Activated CD8-positive, alpha-beta T cell treated with anti-CD3 and anti-CD28 coated beads for 36 hours (primary cell): ENCODE measurements at regions of chr17 and their contacts with region 1.

Region 1: DNA sequence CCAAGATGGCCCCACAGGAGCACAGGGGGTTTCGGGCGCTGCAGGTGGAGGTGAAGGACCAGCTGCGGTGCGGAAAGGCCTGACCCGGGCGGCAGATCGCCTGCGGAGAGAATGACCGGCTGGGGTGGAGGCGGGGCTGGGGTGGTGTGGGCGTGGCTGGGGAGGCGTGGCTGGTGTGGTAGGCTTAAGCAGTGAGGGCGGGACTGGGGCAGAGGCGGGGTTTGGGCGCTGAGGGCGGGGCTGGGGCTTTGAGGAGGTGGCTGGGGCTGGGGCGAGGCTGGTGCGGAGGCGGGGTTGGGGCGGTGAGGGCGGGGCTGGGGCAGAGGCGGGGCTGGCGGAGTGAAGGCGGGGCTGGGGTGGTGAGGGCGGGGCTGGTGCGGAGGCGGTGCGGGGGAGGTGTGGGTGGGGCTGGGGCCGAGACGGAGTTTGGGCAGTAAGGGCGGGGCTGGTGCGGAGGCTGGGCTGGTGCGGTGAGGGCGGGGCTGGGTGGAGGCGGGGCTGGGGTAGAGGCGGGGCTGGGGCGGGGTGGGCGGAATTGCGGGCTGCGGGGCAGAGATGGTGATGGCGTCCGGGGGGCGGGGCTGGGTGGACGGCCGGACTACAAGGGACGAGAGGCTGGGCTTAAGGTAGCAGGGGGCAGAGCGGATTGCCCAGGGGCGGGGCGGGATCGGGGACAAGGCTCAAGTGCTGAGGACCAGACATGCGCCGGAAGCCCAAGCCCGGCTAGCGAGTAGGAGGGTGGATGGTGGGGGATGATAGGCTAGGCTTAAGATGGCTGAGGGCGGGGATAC is 9.9 kb upstream of the GSDMA start:
- DNase-seq: peak; percentile 94
- ATAC-seq: peak; percentile 83
- H3K4me3 Mint-ChIP-seq: peak overlapping the region; percentile 77
- H3K27ac Mint-ChIP-seq: peak overlapping the region; percentile 84
- H3K4me1 Mint-ChIP-seq: peaks cover 22% of the 10 kb centered on the region
- H3K27me3 Mint-ChIP-seq: no peaks in the 10 kb centered on the region
- CTCF ChIP-seq: no peak

Region 2: GRCh38 chr17:39969375-39969774 is 16.5 kb after region 1 on chr17:
- CTCF ChIA-PET with region 1: interaction called, 16 read pairs
- POLR2A ChIA-PET with region 1: interaction called, 3 read pairs
- intact Hi-C with region 1: no loop called
- DNase-seq: no peak
- ATAC-seq: no peak
- H3K4me3 Mint-ChIP-seq: no peak overlapping the region
- H3K27ac Mint-ChIP-seq: no peak overlapping the region
- H3K4me1 Mint-ChIP-seq: no peaks in the 10 kb centered on the region
- H3K27me3 Mint-ChIP-seq: peaks cover 2% of the 10 kb centered on the region
- CTCF ChIP-seq: no peak